ENCODE measurements at regions of chr18 and their contacts with region 1.

Region 1: GRCh38 chr18:45324495-45325113 is 290.7 kb upstream of the SLC14A2 start:
- DNase-seq: peak; percentile 89
- H3K4me3 Mint-ChIP-seq: no peak overlapping the region
- H3K27ac Mint-ChIP-seq: peak overlapping the region; percentile 50
- H3K4me1 Mint-ChIP-seq: peaks cover 17% of the 10 kb centered on the region
- H3K27me3 Mint-ChIP-seq: peaks cover under 1% of the 10 kb centered on the region
- CTCF ChIP-seq: no peak

Region 2: GRCh38 chr18:45353530-45353929 is 28.9 kb after region 1 on chr18:
- CTCF ChIA-PET with region 1: interaction called, 3 read pairs
- POLR2A ChIA-PET with region 1: no interaction called
- intact Hi-C with region 1: loop called (anchors 1 kb)
- DNase-seq: peak; percentile 57
- H3K4me3 Mint-ChIP-seq: no peak overlapping the region
- H3K27ac Mint-ChIP-seq: no peak overlapping the region
- H3K4me1 Mint-ChIP-seq: peaks cover 22% of the 10 kb centered on the region
- H3K27me3 Mint-ChIP-seq: no peaks in the 10 kb centered on the region
- CTCF ChIP-seq: no peak

Measured in MCF 10A (cell line).